SK-N-SH (cell line): ENCODE measurements at regions of chr9 and their contacts with region 1.

Region 1: GRCh38 chr9:32431940-32432555 is 47.6 kb downstream of the ACO1 start:
- DNase-seq: peak; percentile 55
- H3K4me3 ChIP-seq: no peak overlapping the region
- H3K27ac ChIP-seq: peak overlapping the region in 1 of 2 experiments; percentile 57; a peak in 2 of 4 replicates
- H3K4me1 ChIP-seq: peaks cover 0 to 17% of the 10 kb centered on the region in 2 experiments; a peak in 3 of 4 replicates
- H3K27me3 ChIP-seq: no peaks in the 10 kb centered on the region
- CTCF ChIP-seq: peak; percentile 73
- EP300 ChIP-seq: no peak
- RAD21 ChIP-seq: peak; percentile 57

Region 2: DNA sequence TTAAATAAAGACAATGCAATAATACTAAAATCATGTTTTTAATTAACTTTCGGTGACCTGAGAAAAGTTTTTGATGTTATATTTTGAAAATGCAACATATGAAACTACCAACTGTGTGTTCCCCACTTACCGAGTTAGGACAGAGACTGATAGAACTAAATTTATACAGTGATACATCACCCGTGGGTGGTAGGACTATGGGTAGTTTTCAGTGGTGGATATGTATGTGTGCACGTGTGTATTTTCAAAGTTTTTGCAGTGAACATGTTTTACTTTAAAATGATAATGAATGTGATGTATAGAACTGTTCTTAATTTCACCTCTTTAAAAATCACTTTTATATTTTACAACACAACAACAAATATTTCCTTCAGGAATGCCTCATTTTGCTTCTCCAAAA is 72.6 kb before region 1 on chr9:
- CTCF ChIA-PET with region 1: no interaction called
- POLR2A ChIA-PET with region 1: no interaction called
- DNase-seq: no peak
- H3K4me3 ChIP-seq: no peak overlapping the region
- H3K27ac ChIP-seq: no peak overlapping the region
- H3K4me1 ChIP-seq: no peaks in the 10 kb centered on the region
- H3K27me3 ChIP-seq: no peaks in the 10 kb centered on the region
- CTCF ChIP-seq: no peak
- EP300 ChIP-seq: no peak
- RAD21 ChIP-seq: no peak

Region 3: GRCh38 chr9:32384364-32385151 is 47.5 kb before region 1 on chr9 and contains the start of gene ACO1:
- CTCF ChIA-PET with region 1: interaction called, 200 read pairs
- POLR2A ChIA-PET with region 1: no interaction called
- DNase-seq: peak; percentile 97
- H3K4me3 ChIP-seq: peak within 1 kb of the TSS; percentile 88 to 91
- H3K27ac ChIP-seq: peak within 1 kb of the TSS; percentile 50 to 65; a peak in 3 of 4 replicates
- H3K4me1 ChIP-seq: peaks cover 0 to 10% of the 10 kb centered on the region in 2 experiments; a peak in 2 of 4 replicates
- H3K27me3 ChIP-seq: no peaks in the 10 kb centered on the region
- CTCF ChIP-seq: no peak
- EP300 ChIP-seq: no peak
- RAD21 ChIP-seq: no peak
- polyA plus RNA-seq, gene ACO1: 25.4 and 33.7 TPM in 2 replicates

Region 4: DNA sequence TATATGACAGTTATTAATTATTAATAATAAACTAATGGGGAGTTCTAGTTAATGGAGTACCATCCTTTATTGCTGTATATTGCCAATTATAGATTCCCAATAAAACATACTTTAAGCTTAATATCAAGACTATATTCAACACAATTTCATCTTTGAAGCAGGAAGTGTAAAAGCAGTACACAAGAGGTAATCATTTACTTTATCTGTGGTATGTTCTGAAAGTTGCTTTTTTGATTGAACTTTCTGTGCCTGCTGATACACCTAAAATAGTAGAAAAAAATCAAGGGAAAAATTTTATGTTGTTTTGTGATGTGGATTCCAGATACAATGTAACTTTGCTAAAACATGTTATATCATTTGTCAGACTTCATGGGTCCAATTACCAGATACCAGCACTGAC is 10.4 kb after region 1 on chr9:
- CTCF ChIA-PET with region 1: interaction called, 20 read pairs
- POLR2A ChIA-PET with region 1: no interaction called
- DNase-seq: no peak
- H3K4me3 ChIP-seq: no peak overlapping the region
- H3K27ac ChIP-seq: no peak overlapping the region
- H3K4me1 ChIP-seq: no peaks in the 10 kb centered on the region
- H3K27me3 ChIP-seq: no peaks in the 10 kb centered on the region
- CTCF ChIP-seq: no peak
- EP300 ChIP-seq: no peak
- RAD21 ChIP-seq: no peak

Region 5: DNA sequence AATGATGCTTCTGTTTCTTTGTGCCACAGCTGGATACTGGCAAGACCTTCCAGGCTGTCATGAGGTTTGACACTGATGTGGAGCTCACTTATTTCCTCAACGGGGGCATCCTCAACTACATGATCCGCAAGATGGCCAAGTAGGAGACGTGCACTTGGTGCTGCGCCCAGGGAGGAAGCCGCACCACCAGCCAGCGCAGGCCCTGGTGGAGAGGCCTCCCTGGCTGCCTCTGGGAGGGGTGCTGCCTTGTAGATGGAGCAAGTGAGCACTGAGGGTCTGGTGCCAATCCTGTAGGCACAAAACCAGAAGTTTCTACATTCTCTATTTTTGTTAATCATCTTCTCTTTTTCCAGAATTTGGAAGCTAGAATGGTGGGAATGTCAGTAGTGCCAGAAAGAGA is 17.9 kb after region 1 on chr9:
- CTCF ChIA-PET with region 1: interaction called, 20 read pairs
- POLR2A ChIA-PET with region 1: no interaction called
- DNase-seq: no peak
- H3K4me3 ChIP-seq: no peak overlapping the region
- H3K27ac ChIP-seq: no peak overlapping the region
- H3K4me1 ChIP-seq: peaks cover 0 to 8% of the 10 kb centered on the region in 2 experiments; a peak in 1 of 4 replicates
- H3K27me3 ChIP-seq: no peaks in the 10 kb centered on the region
- CTCF ChIP-seq: no peak
- EP300 ChIP-seq: no peak
- RAD21 ChIP-seq: no peak

Region 6: DNA sequence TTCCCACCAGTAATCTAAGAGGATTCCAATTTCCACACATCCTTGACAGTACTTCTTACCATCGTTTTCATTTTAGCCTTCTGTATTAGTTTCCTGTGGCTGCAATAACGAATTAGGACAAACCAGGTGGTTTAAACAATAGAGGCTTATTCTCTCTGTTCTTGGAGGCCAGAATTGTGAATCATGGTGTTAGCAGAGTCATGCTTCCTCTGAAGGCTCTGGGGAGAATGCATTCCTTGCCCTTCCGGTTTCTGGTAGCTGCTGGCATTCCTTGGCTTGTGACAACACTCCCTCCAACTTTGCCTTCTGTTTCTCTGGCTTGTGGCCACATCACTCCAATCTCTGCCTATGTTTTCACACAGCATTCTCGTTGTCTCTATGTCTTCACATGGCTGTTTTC is 70.4 kb after region 1 on chr9:
- CTCF ChIA-PET with region 1: no interaction called
- POLR2A ChIA-PET with region 1: no interaction called
- DNase-seq: no peak
- H3K4me3 ChIP-seq: no peak overlapping the region
- H3K27ac ChIP-seq: no peak overlapping the region
- H3K4me1 ChIP-seq: 0 out of 4 replicates have a peak, but pooled peaks cover 0 to 3% of the 10 kb centered on the region in 2 experiments
- H3K27me3 ChIP-seq: no peaks in the 10 kb centered on the region
- CTCF ChIP-seq: no peak
- EP300 ChIP-seq: no peak
- RAD21 ChIP-seq: no peak

Region 7: DNA sequence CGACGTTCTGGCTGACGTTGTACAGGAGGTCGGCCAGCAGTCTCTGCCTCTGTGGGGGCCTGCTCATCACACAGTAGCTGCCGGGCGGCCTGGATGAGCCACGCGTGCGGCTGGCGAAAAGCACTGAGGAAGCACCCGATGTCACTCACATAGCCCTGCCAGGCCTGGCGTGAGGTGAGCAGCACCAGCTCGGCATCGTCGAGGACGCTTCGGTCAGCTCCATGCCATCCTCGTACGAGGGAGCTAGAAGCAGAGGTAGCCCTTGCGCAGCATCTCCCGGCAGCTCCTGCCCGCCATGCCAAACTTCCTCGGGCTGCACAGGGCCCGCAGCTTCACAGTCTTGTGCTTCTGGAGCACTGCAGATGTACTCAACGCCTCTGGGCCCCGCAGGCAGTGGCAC is 134.7 kb after region 1 on chr9:
- CTCF ChIA-PET with region 1: no interaction called
- POLR2A ChIA-PET with region 1: no interaction called
- DNase-seq: no peak
- H3K4me3 ChIP-seq: no peak overlapping the region
- H3K27ac ChIP-seq: no peak overlapping the region
- H3K4me1 ChIP-seq: peaks cover 11 to 13% of the 10 kb centered on the region in 2 experiments; a peak in 3 of 4 replicates
- H3K27me3 ChIP-seq: no peaks in the 10 kb centered on the region
- CTCF ChIP-seq: no peak
- EP300 ChIP-seq: no peak
- RAD21 ChIP-seq: no peak

Region 8: GRCh38 chr9:33202552-33203201 is 770.6 kb after region 1 on chr9:
- CTCF ChIA-PET with region 1: no interaction called
- POLR2A ChIA-PET with region 1: no interaction called
- DNase-seq: no peak
- H3K4me3 ChIP-seq: no peak overlapping the region
- H3K27ac ChIP-seq: no peak overlapping the region
- H3K4me1 ChIP-seq: no peaks in the 10 kb centered on the region; a peak in 1 of 4 replicates
- H3K27me3 ChIP-seq: no peaks in the 10 kb centered on the region; the same call in 1 of the 2 replicates
- CTCF ChIP-seq: no peak
- EP300 ChIP-seq: no peak
- RAD21 ChIP-seq: no peak